Activated T-helper 2 cell treated with anti-CD3 and anti-CD28 coated beads, Interferon-gamma antibody, Interleukin-2, Interleukin-4, amounts not matched to agents 10 μg/mL and 5 μg/mL and 100 μg/mL, durations not matched to agents 14 hours and 24 hours and 36 hours (primary cell): ENCODE measurements at regions of chr6 and their contacts with region 1.

Region 1: DNA sequence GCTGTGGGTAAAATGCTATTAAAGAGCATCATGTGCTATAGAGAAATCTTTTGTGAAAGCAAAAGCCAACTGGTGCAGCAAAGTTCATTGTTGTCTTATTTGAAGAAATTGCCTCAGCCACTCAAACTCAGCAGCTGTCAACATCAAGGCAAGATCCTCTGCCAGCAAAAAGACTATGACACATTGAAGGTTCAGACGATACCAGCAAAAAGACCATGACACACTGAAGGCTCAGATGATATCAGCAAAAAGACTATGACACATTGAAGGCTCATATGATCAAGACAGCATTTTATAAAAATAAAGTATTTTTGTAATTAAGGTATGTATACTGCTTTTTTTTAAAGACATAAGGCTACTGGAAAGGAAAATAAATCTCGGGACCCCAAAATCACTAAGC is 118.4 kb upstream of the RUNX2 start:
- DNase-seq: no peak
- H3K4me3 Mint-ChIP-seq: no peak overlapping the region
- H3K27ac Mint-ChIP-seq: peak overlapping the region; percentile 47
- H3K4me1 Mint-ChIP-seq: peaks cover 50% of the 10 kb centered on the region
- H3K27me3 Mint-ChIP-seq: no peaks in the 10 kb centered on the region

Region 2: GRCh38 chr6:44642870-44643529 is 566.8 kb before region 1 on chr6:
- intact Hi-C with region 1: loop called (anchors 10 kb)
- DNase-seq: peak; percentile 39
- H3K4me3 Mint-ChIP-seq: no peak overlapping the region
- H3K27ac Mint-ChIP-seq: peak overlapping the region; percentile 91
- H3K4me1 Mint-ChIP-seq: peaks cover 31% of the 10 kb centered on the region
- H3K27me3 Mint-ChIP-seq: no peaks in the 10 kb centered on the region

Region 3: GRCh38 chr6:44898296-44898930 is 311.3 kb before region 1 on chr6:
- intact Hi-C with region 1: no loop called
- DNase-seq: no peak
- H3K4me3 Mint-ChIP-seq: no peak overlapping the region
- H3K27ac Mint-ChIP-seq: no peak overlapping the region
- H3K4me1 Mint-ChIP-seq: no peaks in the 10 kb centered on the region
- H3K27me3 Mint-ChIP-seq: no peaks in the 10 kb centered on the region

Region 4: DNA sequence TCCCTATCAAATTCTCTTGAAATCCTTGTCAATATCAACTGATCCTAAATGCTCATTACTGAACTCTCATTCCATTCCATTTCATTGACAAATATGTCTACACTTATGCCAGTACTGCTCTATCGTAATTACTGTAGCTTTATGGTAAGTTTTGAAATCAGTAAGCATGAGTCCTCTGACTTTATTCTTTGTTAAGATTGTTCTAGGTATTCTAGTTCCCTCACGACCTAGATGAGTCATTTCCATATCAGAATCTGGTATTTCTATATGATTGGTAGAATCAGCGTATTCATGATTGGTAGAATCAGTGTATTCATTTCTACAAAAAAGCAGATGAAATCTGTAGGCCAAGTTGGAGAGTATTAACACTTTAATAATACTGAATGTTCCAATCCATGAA is 200.2 kb before region 1 on chr6:
- intact Hi-C with region 1: loop called (anchors 2 kb)
- DNase-seq: no peak
- H3K4me3 Mint-ChIP-seq: no peak overlapping the region
- H3K27ac Mint-ChIP-seq: peak overlapping the region; percentile 66
- H3K4me1 Mint-ChIP-seq: peaks cover 42% of the 10 kb centered on the region
- H3K27me3 Mint-ChIP-seq: no peaks in the 10 kb centered on the region

Region 5: DNA sequence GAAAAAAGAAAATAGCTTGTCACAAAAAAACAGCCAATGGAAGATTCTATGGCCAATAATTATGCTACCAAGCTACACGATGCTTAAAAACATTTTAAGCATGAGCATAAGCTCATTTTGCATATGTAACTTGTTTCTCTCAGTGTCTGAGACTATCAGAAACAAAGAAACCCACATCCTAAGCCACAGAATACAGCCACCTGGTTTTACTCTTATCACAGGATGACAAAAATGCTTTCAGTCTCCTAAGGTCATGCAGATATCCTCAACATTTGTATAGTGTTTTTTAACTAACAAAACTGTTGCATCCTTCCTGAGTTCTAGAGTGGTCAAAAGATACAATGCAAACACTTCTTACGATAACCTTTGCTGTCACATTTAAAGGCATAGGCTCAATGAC is 53.7 kb before region 1 on chr6:
- intact Hi-C with region 1: loop called (anchors 1 kb)
- DNase-seq: peak; percentile 36
- H3K4me3 Mint-ChIP-seq: no peak overlapping the region
- H3K27ac Mint-ChIP-seq: peak overlapping the region; percentile 46
- H3K4me1 Mint-ChIP-seq: peaks cover 41% of the 10 kb centered on the region
- H3K27me3 Mint-ChIP-seq: no peaks in the 10 kb centered on the region

Region 6: GRCh38 chr6:45297320-45297719 is 87.6 kb after region 1 on chr6:
- intact Hi-C with region 1: loop called (anchors 10 kb)
- DNase-seq: no peak
- H3K4me3 Mint-ChIP-seq: no peak overlapping the region
- H3K27ac Mint-ChIP-seq: no peak overlapping the region
- H3K4me1 Mint-ChIP-seq: peaks cover 46% of the 10 kb centered on the region
- H3K27me3 Mint-ChIP-seq: no peaks in the 10 kb centered on the region